Mammary epithelial cell (primary cell): ENCODE measurements at regions of chr16 and their contacts with region 1.

Region 1: DNA sequence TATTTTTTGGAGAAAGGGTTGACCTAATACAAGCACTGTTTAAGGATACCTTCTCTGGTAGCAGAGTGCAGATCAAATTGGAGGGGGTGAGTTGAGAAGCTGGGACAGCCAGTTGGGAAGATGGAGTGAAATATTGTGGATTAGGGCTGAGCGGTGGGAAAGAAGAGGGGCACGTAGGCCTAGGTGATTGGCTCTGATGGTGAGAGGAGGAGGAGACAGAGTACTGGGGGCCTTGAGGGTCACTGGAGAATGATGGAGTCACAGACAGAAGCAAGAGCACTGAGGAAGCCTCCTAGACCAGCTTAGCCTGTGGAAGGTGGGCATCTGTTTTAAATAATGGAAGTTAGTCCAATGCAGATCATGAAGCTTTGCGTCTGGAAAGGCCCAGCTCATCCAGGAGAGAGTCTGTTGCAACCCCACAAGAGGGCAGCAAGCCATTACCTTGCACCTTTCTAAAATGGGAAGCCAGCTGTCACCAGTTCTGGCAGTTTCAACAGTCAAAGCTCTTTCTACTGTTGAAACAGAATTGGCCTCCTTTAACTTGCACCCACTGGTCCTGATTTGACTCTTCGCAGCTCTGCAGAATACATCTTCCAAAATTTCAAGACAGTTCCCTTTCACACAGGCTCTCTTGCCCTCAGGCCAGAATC is 11.8 kb downstream of the SLC9A5 start:
- DNase-seq: peak; percentile 50
- H3K4me3 ChIP-seq: no peak overlapping the region
- H3K27ac ChIP-seq: no peak overlapping the region
- H3K4me1 ChIP-seq: no peaks in the 10 kb centered on the region
- H3K27me3 ChIP-seq: peaks cover 3% of the 10 kb centered on the region
- CTCF ChIP-seq: peak; percentile 71 to 82

Region 2: DNA sequence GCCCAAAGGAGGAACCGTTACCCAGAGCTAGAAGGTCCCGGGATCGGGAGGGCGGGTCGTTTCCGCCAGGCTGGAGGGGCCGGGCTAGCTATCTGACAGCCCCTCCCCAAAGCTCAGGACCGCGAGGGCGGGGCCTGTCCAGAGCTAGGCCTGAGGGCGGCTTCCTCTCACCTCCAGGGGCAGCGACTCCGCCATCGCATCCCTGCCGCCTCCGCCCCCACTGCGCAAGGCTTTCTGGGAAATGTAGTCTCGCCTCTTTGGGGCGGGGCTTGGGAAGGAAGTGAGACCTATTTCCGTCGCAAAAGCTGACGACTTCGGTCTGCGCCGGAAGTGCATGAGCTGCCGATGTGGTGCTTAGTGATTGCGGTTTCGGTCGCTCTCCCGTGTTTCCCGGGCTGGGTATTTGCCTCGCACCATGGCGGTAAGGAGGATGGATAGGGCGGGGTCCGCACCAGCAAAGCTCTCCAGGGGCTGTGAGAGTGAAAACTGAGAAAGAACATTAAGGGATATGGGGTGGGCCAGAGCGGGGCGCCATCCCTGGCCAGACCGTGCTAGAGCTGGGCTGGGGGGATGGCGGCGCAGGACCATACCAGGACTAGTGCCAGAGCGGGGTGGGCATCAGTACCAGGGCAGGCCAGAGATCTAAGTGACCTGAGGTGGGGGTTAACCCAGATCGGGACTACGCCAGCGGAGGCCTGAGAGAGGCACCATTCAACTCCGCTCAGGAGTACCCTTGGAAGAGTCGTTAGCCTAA is 33.6 kb before region 1 on chr16 and contains the start of gene TMEM208:
- CTCF ChIA-PET with region 1: no interaction called
- dilution Hi-C with region 1: no loop called
- in situ Hi-C with region 1: no loop called
- intact Hi-C with region 1: no loop called
- DNase-seq: peak; percentile 98
- H3K4me3 ChIP-seq: peak within 1 kb of the TSS; percentile 71 to 98 (median 86)
- H3K27ac ChIP-seq: peak within 1 kb of the TSS; percentile 73
- H3K4me1 ChIP-seq: peaks cover 11% of the 10 kb centered on the region
- H3K27me3 ChIP-seq: no peaks in the 10 kb centered on the region
- CTCF ChIP-seq: peak in 1 of 2 donors; percentile 22
- total RNA-seq, gene TMEM208: 24.5 to 43.1 TPM

Region 3: DNA sequence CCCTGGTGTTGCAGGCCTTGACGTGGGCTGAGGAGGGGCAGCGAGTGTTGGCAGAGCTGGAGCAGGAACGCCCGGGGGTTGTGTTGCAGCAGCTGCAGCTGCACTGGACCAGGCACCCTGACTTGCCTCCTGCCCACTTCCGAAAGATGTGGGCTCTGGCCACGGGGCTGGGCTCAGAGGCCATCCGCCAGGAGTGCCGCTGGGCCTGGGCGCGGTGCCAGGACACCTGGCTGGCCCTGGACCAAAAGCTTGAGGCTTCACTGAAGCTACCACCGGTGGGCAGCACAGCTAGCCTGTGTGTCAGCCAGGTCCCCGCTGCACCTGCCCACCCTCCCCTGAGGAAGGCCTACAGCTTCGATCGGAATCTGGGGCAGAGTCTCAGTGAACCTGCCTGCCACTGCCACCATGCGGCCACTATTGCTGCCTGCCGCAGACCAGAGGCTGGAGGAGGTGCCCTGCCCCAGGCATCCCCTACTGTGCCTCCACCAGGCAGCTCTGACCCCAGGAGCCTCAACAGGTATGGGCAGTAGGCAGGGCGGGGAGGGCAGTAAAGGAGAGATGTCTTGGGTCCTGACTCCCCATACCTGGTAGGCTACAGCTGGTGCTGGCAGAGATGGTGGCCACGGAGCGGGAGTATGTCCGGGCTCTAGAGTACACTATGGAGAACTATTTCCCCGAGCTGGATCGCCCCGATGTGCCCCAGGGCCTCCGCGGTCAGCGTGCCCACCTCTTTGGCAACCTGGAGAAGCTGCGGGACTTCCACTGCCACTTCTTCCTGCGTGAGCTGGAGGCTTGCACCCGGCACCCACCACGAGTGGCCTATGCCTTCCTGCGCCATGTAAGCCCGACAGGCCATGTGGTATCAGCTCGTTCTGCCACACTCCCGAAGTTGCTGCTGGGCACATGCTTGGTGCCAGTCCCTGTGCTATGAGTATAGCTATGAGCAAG is 24.4 kb after region 1 on chr16:
- CTCF ChIA-PET with region 1: interaction called, 13 read pairs
- dilution Hi-C with region 1: no loop called
- in situ Hi-C with region 1: no loop called
- intact Hi-C with region 1: loop called (anchors 1 kb)
- DNase-seq: peak; percentile 59
- H3K4me3 ChIP-seq: no peak overlapping the region
- H3K27ac ChIP-seq: no peak overlapping the region
- H3K4me1 ChIP-seq: peaks cover 5% of the 10 kb centered on the region
- H3K27me3 ChIP-seq: no peaks in the 10 kb centered on the region
- CTCF ChIP-seq: peak; percentile 58 to 89

Region 4: GRCh38 chr16:67296422-67296821 is 35.9 kb after region 1 on chr16:
- CTCF ChIA-PET with region 1: no interaction called
- dilution Hi-C with region 1: no loop called
- in situ Hi-C with region 1: no loop called
- intact Hi-C with region 1: no loop called
- DNase-seq: peak; percentile 37
- H3K4me3 ChIP-seq: no peak overlapping the region
- H3K27ac ChIP-seq: no peak overlapping the region
- H3K4me1 ChIP-seq: no peaks in the 10 kb centered on the region
- H3K27me3 ChIP-seq: peaks cover 11% of the 10 kb centered on the region
- CTCF ChIP-seq: no peak

Region 5: GRCh38 chr16:67364600-67365235 is 104.2 kb after region 1 on chr16:
- CTCF ChIA-PET with region 1: no interaction called
- dilution Hi-C with region 1: loop called (anchors 5 kb)
- in situ Hi-C with region 1: no loop called
- intact Hi-C with region 1: no loop called
- DNase-seq: no peak
- H3K4me3 ChIP-seq: no peak overlapping the region
- H3K27ac ChIP-seq: no peak overlapping the region
- H3K4me1 ChIP-seq: no peaks in the 10 kb centered on the region
- H3K27me3 ChIP-seq: peaks cover 4% of the 10 kb centered on the region
- CTCF ChIP-seq: no peak

Region 6: GRCh38 chr16:67415872-67416793 is 155.6 kb after region 1 on chr16 and contains the start of gene ZDHHC1:
- CTCF ChIA-PET with region 1: interaction called, 3 read pairs
- dilution Hi-C with region 1: no loop called
- in situ Hi-C with region 1: loop called in 1 of 2 experiments (anchors 25 kb)
- intact Hi-C with region 1: loop called (anchors 1 kb)
- DNase-seq: peak; percentile 53
- H3K4me3 ChIP-seq: peak within 1 kb of the TSS; percentile 54 to 74 (median 62)
- H3K27ac ChIP-seq: peak within 1 kb of the TSS; percentile 59
- H3K4me1 ChIP-seq: peaks cover 7% of the 10 kb centered on the region
- H3K27me3 ChIP-seq: no peaks in the 10 kb centered on the region
- CTCF ChIP-seq: peak; percentile 47 to 66
- total RNA-seq, gene ZDHHC1: 5.3 to 6.3 TPM

Region 7: GRCh38 chr16:67461600-67462592 is 201.3 kb after region 1 on chr16:
- CTCF ChIA-PET with region 1: no interaction called
- dilution Hi-C with region 1: no loop called
- in situ Hi-C with region 1: no loop called
- intact Hi-C with region 1: loop called (anchors 2 kb)
- DNase-seq: no peak
- H3K4me3 ChIP-seq: no peak overlapping the region
- H3K27ac ChIP-seq: no peak overlapping the region
- H3K4me1 ChIP-seq: peaks cover 38% of the 10 kb centered on the region
- H3K27me3 ChIP-seq: no peaks in the 10 kb centered on the region
- CTCF ChIP-seq: no peak